OCI-LY7 (cell line): ENCODE measurements at regions of chr6 and their contacts with region 1.

Region 1: GRCh38 chr6:160992061-160992979 is 751 bp downstream of the MAP3K4 start:
- DNase-seq: peak; percentile 78
- H3K4me3 ChIP-seq: peak overlapping the region; percentile 86
- H3K27ac ChIP-seq: peak overlapping the region; percentile 76
- H3K4me1 ChIP-seq: peaks cover 13% of the 10 kb centered on the region
- CTCF ChIP-seq: peak; percentile 87

Region 2: GRCh38 chr6:160972111-160972510 is 20.2 kb before region 1 on chr6:
- CTCF ChIA-PET with region 1: no interaction called
- POLR2A ChIA-PET with region 1: no interaction called
- intact Hi-C with region 1: no loop called
- DNase-seq: no peak
- H3K4me3 ChIP-seq: no peak overlapping the region
- H3K27ac ChIP-seq: no peak overlapping the region
- H3K4me1 ChIP-seq: no peaks in the 10 kb centered on the region
- CTCF ChIP-seq: no peak

Region 3: GRCh38 chr6:161169696-161170095 is 177.4 kb after region 1 on chr6:
- CTCF ChIA-PET with region 1: no interaction called
- POLR2A ChIA-PET with region 1: interaction called, 3 read pairs
- intact Hi-C with region 1: loop called (anchors 10 kb)
- DNase-seq: peak; percentile 8
- H3K4me3 ChIP-seq: peak overlapping the region; percentile 25
- H3K27ac ChIP-seq: peak overlapping the region; percentile 77
- H3K4me1 ChIP-seq: peaks cover 34% of the 10 kb centered on the region
- CTCF ChIP-seq: no peak